Transverse colon (tissue), 4 donors: ENCODE measurements at regions of chr2 and their contacts with region 1.

Region 1: GRCh38 chr2:174341286-174341994 is 6.7 kb downstream of the SP9 start:
- DNase-seq: peak; percentile 88
- H3K4me3 ChIP-seq: peak overlapping the region in 1 of 4 donors; percentile 22
- H3K27ac ChIP-seq: no peak overlapping the region
- H3K4me1 ChIP-seq: peaks cover 19 to 64% (median 51%) of the 10 kb centered on the region in 4 donors
- H3K27me3 ChIP-seq: peaks cover 99% of the 10 kb centered on the region
- CTCF ChIP-seq: peak; percentile 91 to 98 (median 98)
- EP300 ChIP-seq: no peak
- POLR2A ChIP-seq: no peak

Region 2: DNA sequence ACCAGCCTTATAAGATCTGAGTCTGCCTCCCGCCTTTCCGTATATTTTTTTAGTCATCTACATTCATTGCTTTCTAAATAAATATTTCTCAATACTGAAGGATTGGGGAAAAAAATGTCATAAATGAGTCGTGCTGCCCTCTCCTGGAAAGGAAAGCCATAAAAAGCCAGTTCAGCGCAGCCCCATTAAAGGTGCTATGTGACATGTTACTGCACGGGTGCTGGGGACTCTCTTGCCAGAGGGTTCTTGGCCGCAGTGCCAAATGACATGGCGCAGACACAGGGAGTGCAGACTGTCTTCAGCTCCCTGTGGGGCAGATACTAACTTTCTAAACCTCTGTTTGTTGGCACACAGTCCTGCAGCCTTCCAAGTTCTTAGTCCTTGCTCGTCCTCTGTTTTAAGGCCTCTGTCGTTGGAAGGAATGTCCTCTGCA is 1319.5 kb before region 1 on chr2:
- in situ Hi-C with region 1: loop called in 2 of 4 experiments (anchors 25 kb)
- intact Hi-C with region 1: no loop called
- DNase-seq: no peak
- H3K4me3 ChIP-seq: no peak overlapping the region
- H3K27ac ChIP-seq: no peak overlapping the region
- H3K4me1 ChIP-seq: peaks cover 0 to 2% (median 0%) of the 10 kb centered on the region in 4 donors
- H3K27me3 ChIP-seq: no peaks in the 10 kb centered on the region
- CTCF ChIP-seq: peak in 2 of 5 experiments; percentile 6 to 18
- EP300 ChIP-seq: no peak
- POLR2A ChIP-seq: no peak

Region 3: DNA sequence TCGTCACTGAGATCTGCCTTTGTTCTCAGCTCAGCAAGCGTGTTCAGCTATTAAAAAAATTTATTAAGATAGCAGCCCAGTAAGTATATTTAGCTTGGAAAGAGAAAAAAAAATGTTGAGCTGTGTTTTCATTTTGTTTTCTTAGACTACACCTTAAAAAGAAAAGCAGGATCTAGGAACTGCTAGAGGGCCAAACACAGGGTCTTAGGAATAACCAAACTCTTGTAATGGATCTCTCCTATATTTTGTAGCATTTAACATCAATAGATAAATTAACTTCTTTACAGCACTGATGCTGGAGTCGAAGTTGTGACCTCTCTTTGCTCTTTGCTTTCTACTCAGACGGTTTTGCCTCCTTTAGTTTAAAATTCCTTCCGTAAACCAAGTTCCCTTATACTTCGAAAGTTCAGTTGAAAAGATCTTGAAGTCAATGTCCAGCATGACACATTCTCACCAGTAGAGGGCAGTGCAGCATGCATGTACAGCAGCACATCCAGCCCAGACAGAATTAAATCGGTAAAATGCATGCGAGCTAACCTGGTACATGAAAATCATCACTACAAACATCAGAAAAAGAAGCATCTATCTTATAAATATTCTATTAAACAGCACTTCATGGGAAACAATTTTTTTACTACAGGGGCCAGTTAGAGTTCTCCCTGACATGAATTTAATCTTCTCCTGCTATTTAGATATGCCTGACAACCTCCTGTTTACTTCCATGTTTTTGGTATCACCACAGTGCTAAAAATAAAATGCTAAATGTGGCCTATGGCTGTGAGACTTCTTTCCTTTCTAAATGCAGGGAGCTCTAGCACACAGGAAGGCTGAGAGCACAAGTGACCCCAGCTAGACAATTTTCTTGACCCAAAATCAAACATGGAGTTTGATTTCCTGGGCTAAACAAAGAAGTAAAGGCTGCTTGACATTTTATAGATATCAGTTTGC is 1314.0 kb before region 1 on chr2:
- in situ Hi-C with region 1: loop called in 2 of 4 experiments (anchors 25 kb)
- intact Hi-C with region 1: no loop called
- DNase-seq: peak; percentile 88
- H3K4me3 ChIP-seq: no peak overlapping the region
- H3K27ac ChIP-seq: peak overlapping the region; percentile 60 to 68 (median 66)
- H3K4me1 ChIP-seq: peaks cover 12 to 28% (median 17%) of the 10 kb centered on the region in 4 donors
- H3K27me3 ChIP-seq: no peaks in the 10 kb centered on the region
- CTCF ChIP-seq: peak; percentile 92 to 96 (median 94)
- EP300 ChIP-seq: no peak
- POLR2A ChIP-seq: no peak

Region 4: GRCh38 chr2:173402405-173402974 is 939.0 kb before region 1 on chr2:
- in situ Hi-C with region 1: loop called in 3 of 4 experiments (anchors 5 to 25 kb)
- intact Hi-C with region 1: loop called (anchors 10 kb)
- DNase-seq: peak; percentile 81
- H3K4me3 ChIP-seq: no peak overlapping the region
- H3K27ac ChIP-seq: no peak overlapping the region
- H3K4me1 ChIP-seq: peaks cover 0 to 15% (median 2%) of the 10 kb centered on the region in 4 donors
- H3K27me3 ChIP-seq: peaks cover 63% of the 10 kb centered on the region
- CTCF ChIP-seq: peak; percentile 78 to 87 (median 84)
- EP300 ChIP-seq: no peak
- POLR2A ChIP-seq: no peak

Region 5: DNA sequence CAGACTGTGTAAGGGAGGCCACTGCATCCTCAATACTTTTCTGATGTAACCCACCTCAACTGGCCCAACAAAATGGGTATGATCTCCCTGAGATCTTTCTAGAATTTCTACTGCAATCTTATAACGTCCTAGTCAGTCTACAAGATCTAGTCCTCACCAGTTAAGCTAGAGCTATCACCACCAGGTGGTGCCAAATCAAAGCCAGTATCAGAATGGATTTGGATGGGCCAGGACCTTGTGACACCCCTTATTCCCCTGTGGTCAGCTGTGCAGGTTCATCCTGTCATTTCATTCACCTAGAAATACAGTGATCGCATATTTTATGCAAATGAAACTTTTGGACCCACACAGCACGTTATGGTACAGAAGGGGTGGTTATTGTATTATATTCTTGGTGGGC is 183.4 kb before region 1 on chr2:
- in situ Hi-C with region 1: loop called in 3 of 4 experiments (anchors 5 to 25 kb)
- intact Hi-C with region 1: no loop called
- DNase-seq: peak; percentile 16
- H3K4me3 ChIP-seq: no peak overlapping the region
- H3K27ac ChIP-seq: no peak overlapping the region
- H3K4me1 ChIP-seq: peaks cover 0 to 6% (median 0%) of the 10 kb centered on the region in 4 donors
- H3K27me3 ChIP-seq: no peaks in the 10 kb centered on the region
- CTCF ChIP-seq: peak; percentile 37 to 45 (median 41)
- EP300 ChIP-seq: no peak
- POLR2A ChIP-seq: no peak

Region 6: GRCh38 chr2:174322746-174323145 is 18.7 kb before region 1 on chr2:
- in situ Hi-C with region 1: no loop called
- intact Hi-C with region 1: loop called (anchors 1 kb)
- DNase-seq: no peak
- H3K4me3 ChIP-seq: no peak overlapping the region
- H3K27ac ChIP-seq: no peak overlapping the region
- H3K4me1 ChIP-seq: peaks cover 14 to 20% (median 18%) of the 10 kb centered on the region in 4 donors
- H3K27me3 ChIP-seq: peaks cover 97% of the 10 kb centered on the region
- CTCF ChIP-seq: no peak
- EP300 ChIP-seq: no peak
- POLR2A ChIP-seq: no peak

Region 7: GRCh38 chr2:174492963-174493431 is 151.6 kb after region 1 on chr2:
- in situ Hi-C with region 1: no loop called
- intact Hi-C with region 1: no loop called
- DNase-seq: peak; percentile 60
- H3K4me3 ChIP-seq: no peak overlapping the region
- H3K27ac ChIP-seq: peak overlapping the region; percentile 57 to 75 (median 66)
- H3K4me1 ChIP-seq: peaks cover 0 to 8% (median 0%) of the 10 kb centered on the region in 4 donors
- H3K27me3 ChIP-seq: no peaks in the 10 kb centered on the region
- CTCF ChIP-seq: no peak
- EP300 ChIP-seq: no peak
- POLR2A ChIP-seq: no peak